Right cardiac atrium (tissue), 5 donors: ENCODE measurements at regions of chr2 and their contacts with region 1.

Region 1: DNA sequence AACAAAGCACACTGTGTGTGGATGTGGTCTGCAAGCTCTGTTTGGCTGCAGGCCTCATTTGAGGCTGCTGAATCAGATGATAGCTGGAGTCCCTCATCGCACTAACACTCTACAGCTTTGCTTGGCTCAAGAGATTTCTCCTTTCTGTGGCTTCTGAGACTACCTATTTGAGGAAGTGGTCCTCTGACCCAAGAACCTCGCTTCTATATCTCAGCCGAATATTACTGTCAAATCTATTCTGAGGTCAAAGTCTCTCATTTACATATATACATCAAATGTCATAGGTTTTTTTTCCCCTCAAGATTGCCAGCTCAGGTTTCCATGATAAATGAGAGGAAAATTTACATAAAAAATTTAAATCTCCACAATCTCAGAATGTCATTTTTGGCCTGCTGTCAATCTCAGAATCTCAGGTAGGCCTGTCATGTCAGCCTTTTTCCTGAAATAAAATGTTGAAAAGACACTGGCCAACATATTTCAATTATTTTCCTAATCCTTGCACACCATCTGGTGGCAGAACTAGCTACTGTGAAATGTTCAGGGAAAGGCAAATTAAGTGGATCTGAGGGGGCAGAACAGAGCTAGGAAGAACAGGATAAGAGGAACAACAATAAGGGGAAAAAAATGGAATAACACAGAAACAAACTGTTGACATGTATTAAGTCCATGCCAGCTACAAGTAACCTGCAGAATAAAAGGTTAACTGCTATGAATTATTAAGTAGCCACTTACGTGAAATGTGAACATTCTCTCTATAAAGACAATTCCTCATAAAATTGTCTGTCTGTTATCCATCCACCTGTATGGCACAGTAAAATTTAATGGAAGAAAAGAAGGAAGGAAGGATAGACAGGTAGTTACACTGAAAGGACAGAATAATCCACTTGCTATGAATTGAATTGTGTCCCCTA is 39.3 kb downstream of the AP1S3 start:
- DNase-seq: no peak
- ATAC-seq: peak; percentile 41 to 66
- H3K4me3 ChIP-seq: no peak overlapping the region
- H3K27ac ChIP-seq: no peak overlapping the region
- H3K4me1 ChIP-seq: no peaks in the 10 kb centered on the region
- H3K27me3 ChIP-seq: no peaks in the 10 kb centered on the region

Region 2: DNA sequence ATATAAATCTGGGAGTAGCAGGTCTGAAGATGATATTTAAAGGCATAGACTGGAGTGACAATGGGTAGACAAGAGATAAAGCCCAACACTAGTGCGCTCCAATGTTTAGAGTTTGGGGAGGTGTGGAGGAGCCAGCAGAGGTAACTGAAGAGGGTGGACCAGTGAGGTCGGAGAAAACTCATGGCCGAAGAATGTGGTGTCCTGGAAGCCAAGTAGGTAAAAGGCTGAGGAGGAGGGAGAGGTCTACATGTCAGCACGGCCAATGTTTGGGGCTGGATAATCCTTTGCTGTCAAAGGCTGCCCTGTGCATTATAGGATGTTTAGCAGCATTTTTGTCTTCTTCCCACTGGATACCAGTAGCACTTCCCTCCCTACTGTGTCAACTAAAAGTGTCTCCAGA is 824.8 kb before region 1 on chr2:
- intact Hi-C with region 1: loop called in 3 of 4 experiments (anchors 2 to 5 kb)
- DNase-seq: no peak
- ATAC-seq: peak in 1 of 2 donors; percentile 49
- H3K4me3 ChIP-seq: no peak overlapping the region
- H3K27ac ChIP-seq: no peak overlapping the region
- H3K4me1 ChIP-seq: no peaks in the 10 kb centered on the region
- H3K27me3 ChIP-seq: no peaks in the 10 kb centered on the region

Region 3: GRCh38 chr2:223626716-223627115 is 171.3 kb before region 1 on chr2:
- intact Hi-C with region 1: no loop called
- DNase-seq: no peak
- ATAC-seq: no peak
- H3K4me3 ChIP-seq: no peak overlapping the region
- H3K27ac ChIP-seq: no peak overlapping the region
- H3K4me1 ChIP-seq: no peaks in the 10 kb centered on the region
- H3K27me3 ChIP-seq: no peaks in the 10 kb centered on the region

Region 4: DNA sequence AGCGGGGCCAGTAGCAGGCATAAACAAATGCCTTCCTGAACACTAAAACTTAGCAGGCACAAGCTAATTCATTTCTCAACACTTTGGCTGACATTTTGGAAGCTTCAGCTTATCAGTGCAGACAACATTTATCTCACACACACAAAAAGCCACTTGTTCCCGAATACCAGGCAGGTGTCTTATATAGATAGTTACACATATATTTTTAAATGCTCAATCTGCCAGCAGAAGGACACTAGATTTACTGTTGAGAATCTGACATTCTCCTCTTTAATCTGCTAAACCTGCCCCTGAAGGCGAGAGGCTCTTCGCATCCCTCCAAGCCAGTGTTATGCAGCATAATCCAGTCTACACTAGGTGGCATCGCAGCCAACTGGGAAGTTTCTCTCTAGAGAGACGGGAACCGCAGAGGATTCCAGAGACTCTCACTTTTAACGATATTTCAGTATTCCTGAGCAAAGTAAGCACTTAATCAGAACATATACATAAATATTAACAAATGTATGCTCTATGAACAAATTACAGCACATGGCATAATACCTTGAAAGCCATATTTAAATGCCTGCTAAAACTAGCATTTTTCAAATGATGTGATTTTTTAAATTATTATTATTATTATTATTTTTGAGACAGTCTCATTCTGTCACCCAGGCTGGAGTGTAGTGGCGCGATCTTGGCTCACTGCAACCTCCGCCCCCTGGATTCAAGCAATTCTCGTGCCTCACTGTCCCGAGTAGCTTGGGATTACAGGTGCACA is 105.7 kb before region 1 on chr2:
- intact Hi-C with region 1: loop called in 3 of 4 experiments (anchors 5 to 10 kb)
- DNase-seq: peak; percentile 34 to 51 (median 48)
- ATAC-seq: peak; percentile 71 to 84
- H3K4me3 ChIP-seq: no peak overlapping the region
- H3K27ac ChIP-seq: no peak overlapping the region
- H3K4me1 ChIP-seq: no peaks in the 10 kb centered on the region
- H3K27me3 ChIP-seq: no peaks in the 10 kb centered on the region